ENCODE measurements at regions of chr14 and their contacts with region 1.

Region 1: DNA sequence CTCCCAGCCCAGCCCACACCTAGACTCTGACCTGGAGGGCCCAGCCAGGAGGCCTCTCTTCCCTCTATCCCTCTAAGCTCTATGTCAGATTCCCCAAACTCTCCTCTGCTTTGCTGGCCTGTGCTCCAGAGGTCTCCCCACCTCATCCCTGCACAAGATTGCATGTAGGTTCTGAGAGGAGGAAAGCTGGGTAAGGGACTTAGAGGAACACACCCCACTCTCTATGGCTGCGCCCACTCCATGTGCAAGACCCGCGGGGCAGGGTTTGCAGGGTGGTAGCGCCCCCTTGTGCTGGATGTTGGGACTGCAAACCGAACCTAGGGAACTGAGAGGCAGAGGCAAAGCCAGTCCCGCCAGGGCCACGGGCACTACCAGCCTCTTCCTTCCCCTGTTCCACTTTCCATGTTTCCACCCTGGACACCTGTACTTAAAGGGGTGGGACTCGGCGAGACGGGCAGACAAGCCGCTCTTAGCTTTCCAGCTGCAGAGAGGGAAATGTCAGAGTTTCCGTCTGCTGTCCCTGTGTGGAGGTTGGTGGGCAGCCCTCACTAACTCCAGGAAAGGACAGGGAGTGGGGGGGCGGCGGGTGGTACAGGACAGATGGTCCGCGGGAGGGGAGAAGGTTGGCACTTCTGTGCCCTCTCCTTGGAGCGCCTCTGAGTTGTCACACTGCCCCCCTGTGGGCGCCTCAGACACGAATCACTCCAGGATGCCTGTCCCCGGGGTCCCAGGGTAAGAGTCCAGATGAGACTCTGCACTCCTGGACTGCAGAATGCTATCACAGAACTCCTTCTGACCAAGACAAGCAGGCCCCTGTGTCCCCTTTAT is 16.8 kb downstream of the MMP14 start:
- DNase-seq: peak; percentile 90 to 92
- ATAC-seq: peak; percentile 48 to 80 (median 64)
- H3K4me3 ChIP-seq: peak overlapping the region; percentile 24 to 61 (median 53)
- H3K27ac ChIP-seq: peak overlapping the region in 7 of 10 donors; percentile 5 to 79 (median 56)
- H3K4me1 ChIP-seq: peaks cover 19 to 54% (median 47%) of the 10 kb centered on the region in 9 donors
- H3K27me3 ChIP-seq: no peaks in the 10 kb centered on the region
- CTCF ChIP-seq: peak; percentile 85 to 97 (median 90)

Region 2: DNA sequence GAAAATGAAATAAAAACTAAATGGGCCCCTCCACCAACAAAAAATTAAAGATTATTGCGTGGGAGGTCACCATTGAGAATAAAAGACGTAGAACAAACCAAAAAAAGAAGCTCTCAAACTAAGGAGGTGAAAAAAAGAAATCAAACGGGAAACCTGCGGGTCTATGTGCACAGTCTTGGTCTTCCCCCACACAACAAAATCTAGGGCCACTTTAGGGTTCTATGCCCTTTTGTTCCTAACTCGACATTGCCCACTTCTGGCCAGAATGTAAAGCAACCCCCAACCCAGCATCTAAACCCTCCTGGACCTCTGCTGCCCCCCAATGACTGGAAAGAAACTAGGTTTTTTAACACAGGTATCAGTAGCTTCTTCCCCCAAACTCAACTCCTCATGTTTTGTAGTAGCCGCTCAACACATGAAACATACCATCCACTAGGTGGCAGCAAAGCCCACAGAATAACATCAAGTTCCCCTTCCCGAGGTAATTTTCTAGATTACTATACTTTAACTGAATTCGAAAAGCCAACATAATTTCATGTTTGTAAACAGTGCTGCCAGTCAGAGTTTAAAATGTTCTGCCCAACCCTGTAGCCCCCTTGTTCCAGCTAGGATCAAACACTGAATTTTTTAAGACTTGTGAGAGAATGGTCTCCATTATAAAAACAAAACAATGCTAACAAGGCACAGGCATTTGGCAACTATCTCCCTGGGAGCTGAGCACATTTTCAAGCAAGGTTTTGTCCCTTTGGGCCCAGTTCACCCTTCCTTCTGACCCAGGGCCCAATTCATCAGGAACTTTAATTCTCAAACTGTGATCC is 282.8 kb before region 1 on chr14:
- intact Hi-C with region 1: loop called in 3 of 10 experiments (anchors 5 to 10 kb)
- DNase-seq: peak in 1 of 2 donors; percentile 85
- ATAC-seq: peak; percentile 57 to 86 (median 78)
- H3K4me3 ChIP-seq: peak overlapping the region in 1 of 10 donors; percentile 12
- H3K27ac ChIP-seq: peak overlapping the region in 4 of 10 donors; percentile 30 to 91 (median 50)
- H3K4me1 ChIP-seq: peaks cover 0 to 66% (median 12%) of the 10 kb centered on the region in 9 donors
- H3K27me3 ChIP-seq: no peaks in the 10 kb centered on the region
- CTCF ChIP-seq: peak; percentile 80 to 88 (median 83)

Region 3: DNA sequence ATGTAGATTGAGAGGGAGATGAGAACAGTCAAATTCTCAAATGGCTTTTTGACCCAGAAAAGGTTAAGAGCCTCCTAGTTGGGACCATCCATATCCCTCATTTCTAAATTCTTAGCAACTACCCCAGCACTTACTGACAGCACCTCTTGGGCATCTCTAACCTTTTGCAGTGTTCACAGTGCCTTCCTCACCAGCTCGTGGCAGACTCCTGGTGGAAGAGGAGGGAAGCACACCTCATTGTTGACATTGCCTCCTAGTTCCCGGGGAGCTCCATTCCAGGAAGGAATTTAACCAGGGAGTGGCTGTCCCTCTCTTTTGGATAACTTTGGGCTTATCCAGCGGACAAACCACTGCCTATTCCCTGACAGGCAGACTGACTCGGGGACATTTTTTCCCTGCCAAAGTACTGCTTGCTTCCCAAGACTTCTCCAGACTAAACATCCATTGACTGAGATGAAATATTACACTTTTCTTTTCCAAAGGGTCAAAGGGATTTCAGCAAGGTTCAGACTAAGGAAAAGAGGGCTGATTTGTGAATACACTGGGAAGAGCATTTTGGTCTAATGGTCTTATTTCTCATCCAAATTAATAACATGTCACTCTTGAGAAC is 200.0 kb before region 1 on chr14:
- intact Hi-C with region 1: loop called in 2 of 10 experiments (anchors 5 kb)
- DNase-seq: peak; percentile 18 to 55
- ATAC-seq: peak in 7 of 8 donors; percentile 66 to 88 (median 77)
- H3K4me3 ChIP-seq: no peak overlapping the region
- H3K27ac ChIP-seq: no peak overlapping the region
- H3K4me1 ChIP-seq: peaks cover 0 to 9% (median 0%) of the 10 kb centered on the region in 9 donors
- H3K27me3 ChIP-seq: peaks cover 0 to 6% (median 0%) of the 10 kb centered on the region in 7 donors
- CTCF ChIP-seq: peak; percentile 55 to 88 (median 79)

Region 4: GRCh38 chr14:22766456-22767322 is 86.5 kb before region 1 on chr14 and contains the start of gene OXA1L:
- intact Hi-C with region 1: loop called in 1 of 10 experiments (anchors 10 kb)
- DNase-seq: peak; percentile 94 to 99
- ATAC-seq: peak; percentile 92 to 97 (median 96)
- H3K4me3 ChIP-seq: peak within 1 kb of the TSS; percentile 65 to 97 (median 86)
- H3K27ac ChIP-seq: peak within 1 kb of the TSS; percentile 85 to 95 (median 90)
- H3K4me1 ChIP-seq: peaks cover 0 to 42% (median 24%) of the 10 kb centered on the region in 9 donors
- H3K27me3 ChIP-seq: no peaks in the 10 kb centered on the region
- CTCF ChIP-seq: no peak
- total RNA-seq, gene OXA1L: 138 to 219 (median 189) TPM

Region 5: DNA sequence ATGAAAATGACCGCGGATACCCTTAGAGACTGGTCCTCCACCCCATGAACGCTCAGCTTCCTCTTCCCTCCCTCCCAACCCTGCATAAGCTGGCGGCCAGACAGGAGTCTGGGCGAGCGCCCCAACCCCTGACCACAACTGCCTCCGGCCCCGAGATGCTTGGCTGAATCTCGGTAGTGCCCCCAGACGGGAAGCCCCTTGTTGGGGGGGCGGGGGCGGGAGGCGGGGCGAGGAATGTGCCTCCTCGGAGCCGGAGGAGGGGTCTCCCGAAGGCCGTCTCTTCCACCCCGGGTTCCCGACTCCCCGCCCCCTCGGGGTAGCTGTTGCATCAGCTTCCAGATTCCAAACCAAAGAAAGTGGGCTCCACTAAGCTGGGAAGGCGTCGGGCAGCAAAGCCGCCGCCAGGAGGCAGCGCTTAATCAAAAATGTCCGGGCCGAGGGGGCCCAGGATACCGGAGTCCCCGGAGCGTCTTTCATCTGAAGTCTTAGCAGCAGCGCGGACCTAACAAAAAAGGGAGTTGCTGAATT is 30.5 kb before region 1 on chr14:
- intact Hi-C with region 1: loop called (anchors 1 to 5 kb)
- DNase-seq: peak; percentile 76 to 82
- ATAC-seq: peak; percentile 83 to 92 (median 88)
- H3K4me3 ChIP-seq: peak overlapping the region; percentile 16 to 60 (median 48)
- H3K27ac ChIP-seq: peak overlapping the region in 5 of 10 donors; percentile 2 to 82 (median 50)
- H3K4me1 ChIP-seq: peaks cover 3 to 61% (median 34%) of the 10 kb centered on the region in 9 donors
- H3K27me3 ChIP-seq: no peaks in the 10 kb centered on the region
- CTCF ChIP-seq: peak; percentile 72 to 99 (median 94)

Region 6: DNA sequence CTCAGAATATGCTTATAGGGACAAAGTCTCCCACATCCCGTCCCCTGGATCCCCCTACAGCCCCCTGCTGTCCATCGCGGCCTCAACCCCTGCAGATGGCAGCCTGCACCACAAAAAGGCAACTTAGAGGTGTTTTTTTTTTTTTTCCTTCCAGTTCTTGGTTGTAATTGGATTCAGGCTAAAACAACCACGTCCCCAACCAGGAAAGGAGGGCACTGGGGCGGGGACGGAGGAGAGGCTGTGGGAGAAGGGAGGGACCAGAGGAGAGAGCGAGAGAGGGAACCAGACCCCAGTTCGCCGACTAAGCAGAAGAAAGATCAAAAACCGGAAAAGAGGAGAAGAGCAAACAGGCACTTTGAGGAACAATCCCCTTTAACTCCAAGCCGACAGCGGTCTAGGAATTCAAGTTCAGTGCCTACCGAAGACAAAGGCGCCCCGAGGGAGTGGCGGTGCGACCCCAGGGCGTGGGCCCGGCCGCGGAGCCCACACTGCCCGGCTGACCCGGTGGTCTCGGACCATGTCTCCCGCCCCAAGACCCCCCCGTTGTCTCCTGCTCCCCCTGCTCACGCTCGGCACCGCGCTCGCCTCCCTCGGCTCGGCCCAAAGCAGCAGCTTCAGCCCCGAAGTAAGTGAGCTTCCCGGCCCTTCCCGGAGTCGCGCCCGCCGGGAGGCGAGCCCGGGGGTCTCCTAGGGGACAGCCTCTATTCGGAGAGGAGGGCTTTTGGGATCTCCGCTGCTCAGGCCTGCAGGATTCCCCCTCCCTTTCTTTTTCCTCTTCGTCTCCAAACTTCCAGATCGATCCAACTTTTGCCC is 16.6 kb before region 1 on chr14 and contains the start of gene MMP14:
- intact Hi-C with region 1: loop called in 3 of 10 experiments (anchors 2 kb)
- DNase-seq: peak; percentile 76 to 77
- ATAC-seq: peak; percentile 74 to 88 (median 81)
- H3K4me3 ChIP-seq: peak within 1 kb of the TSS; percentile 59 to 96 (median 88)
- H3K27ac ChIP-seq: peak within 1 kb of the TSS; percentile 86 to 98 (median 94)
- H3K4me1 ChIP-seq: peaks cover 7 to 47% (median 30%) of the 10 kb centered on the region in 9 donors
- H3K27me3 ChIP-seq: peaks cover 0 to 9% (median 0%) of the 10 kb centered on the region in 7 donors
- CTCF ChIP-seq: peak in 8 of 9 donors; percentile 23 to 71 (median 42)
- total RNA-seq, gene MMP14: 13.6 to 43.3 (median 20.2) TPM

Measured in heart right ventricle (tissue), 16 donors.